Prostate gland (tissue), 2 donors: ENCODE measurements at regions of chr14 and their contacts with region 1.

Region 1: DNA sequence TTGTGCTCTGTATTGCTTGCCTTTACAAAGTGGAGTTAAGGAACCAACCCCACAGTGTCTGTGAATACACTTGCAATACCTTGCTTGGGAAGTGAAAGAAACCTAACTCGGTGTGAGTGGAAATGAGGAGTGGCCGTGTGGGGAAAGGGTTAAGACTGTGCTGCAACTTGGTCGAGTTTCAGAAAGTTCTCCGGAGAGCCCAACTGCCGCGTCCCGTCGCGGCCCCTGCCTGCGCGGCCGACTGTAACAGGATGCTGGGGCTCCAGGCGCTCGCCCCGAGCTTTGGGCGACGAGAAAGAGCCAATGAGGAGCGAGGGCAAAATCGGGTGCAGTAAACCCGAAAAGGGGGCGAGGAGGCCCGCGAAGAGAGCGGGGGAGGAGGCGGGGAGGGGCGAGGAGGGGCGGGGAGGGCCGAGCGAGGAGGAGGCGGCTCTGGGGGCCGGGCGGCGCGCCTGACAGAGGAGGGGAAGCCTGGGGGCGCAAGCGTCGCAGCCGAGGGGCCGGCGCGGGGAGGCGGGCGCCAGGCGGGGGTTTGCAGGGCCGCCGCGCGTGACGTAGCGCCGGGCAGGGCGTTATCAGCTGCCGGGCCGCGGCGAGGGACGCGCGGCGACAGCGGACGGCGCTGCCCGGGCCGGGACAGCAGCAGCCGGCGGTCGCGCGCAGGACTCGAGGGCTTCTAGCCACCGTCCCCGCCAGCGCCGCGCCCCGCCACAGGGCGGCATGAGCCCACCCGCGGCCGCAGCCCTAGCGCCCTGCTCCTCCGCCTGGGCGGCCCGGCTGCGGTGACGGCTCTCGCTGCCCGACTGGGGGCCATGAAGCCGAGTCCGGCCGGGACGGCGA is at the start of gene DACT1:
- DNase-seq: peak; percentile 45
- H3K4me3 ChIP-seq: peak within 1 kb of the TSS; percentile 56 to 58
- H3K27ac ChIP-seq: peak within 1 kb of the TSS; percentile 80 to 81
- H3K4me1 ChIP-seq: peaks cover 3% of the 10 kb centered on the region
- H3K27me3 ChIP-seq: no peaks in the 10 kb centered on the region
- CTCF ChIP-seq: peak in 1 of 4 experiments; percentile 32
- POLR2A ChIP-seq: no peak
- total RNA-seq, gene DACT1: 4.5 to 27.1 TPM

Region 2: DNA sequence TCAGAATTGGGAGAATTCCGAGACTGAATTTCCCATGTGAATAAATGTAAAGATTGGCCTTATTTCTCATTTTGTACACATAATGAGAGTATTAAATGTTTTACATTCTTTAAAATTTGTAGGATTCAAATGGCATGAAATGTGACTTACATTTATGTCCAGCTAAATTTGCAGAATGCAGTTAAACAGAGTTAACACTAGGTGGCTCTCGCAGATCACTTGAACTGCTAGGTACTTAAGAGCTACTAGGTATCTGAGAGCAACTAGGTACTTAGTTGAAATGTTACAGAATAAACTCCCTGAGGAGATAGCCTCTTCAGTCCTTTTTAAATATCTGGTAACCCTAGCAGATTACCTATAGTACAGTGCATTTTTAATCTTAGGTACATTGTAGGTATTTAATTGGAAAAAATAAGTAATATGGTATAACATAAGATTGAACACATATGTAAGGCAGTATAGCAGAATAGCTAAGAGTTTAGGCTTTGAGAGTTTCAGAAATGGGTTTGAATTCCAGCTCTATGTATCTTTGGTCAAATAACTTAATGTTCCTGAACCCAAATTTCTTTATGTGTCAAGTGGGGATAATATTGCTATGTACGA is 136.3 kb before region 1 on chr14:
- intact Hi-C with region 1: loop called (anchors 2 kb)
- DNase-seq: no peak
- H3K4me3 ChIP-seq: no peak overlapping the region
- H3K27ac ChIP-seq: no peak overlapping the region
- H3K4me1 ChIP-seq: no peaks in the 10 kb centered on the region
- H3K27me3 ChIP-seq: no peaks in the 10 kb centered on the region
- CTCF ChIP-seq: peak; percentile 42 to 87 (median 72)
- POLR2A ChIP-seq: no peak

Region 3: DNA sequence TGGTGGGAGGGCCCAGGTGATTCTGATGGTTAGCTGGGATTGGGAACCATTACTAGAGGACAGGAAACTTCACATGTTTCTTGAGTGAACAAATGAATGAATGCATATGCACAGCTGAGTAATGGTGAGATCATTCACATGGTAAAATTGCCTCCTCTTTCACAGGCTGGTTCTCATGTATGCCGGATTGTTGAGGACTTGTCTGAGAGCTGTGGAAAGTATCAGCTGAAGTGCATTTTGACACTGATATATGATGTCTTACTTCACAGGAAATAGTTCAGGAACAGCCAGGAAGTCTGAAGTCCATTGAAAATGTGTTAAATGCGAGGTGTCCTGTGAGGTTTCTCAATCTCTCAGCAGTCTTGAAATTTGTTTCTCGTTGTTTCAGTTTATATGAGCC is 77.4 kb before region 1 on chr14:
- intact Hi-C with region 1: no loop called
- DNase-seq: no peak
- H3K4me3 ChIP-seq: no peak overlapping the region
- H3K27ac ChIP-seq: no peak overlapping the region
- H3K4me1 ChIP-seq: no peaks in the 10 kb centered on the region
- H3K27me3 ChIP-seq: no peaks in the 10 kb centered on the region
- CTCF ChIP-seq: no peak
- POLR2A ChIP-seq: no peak

Region 4: DNA sequence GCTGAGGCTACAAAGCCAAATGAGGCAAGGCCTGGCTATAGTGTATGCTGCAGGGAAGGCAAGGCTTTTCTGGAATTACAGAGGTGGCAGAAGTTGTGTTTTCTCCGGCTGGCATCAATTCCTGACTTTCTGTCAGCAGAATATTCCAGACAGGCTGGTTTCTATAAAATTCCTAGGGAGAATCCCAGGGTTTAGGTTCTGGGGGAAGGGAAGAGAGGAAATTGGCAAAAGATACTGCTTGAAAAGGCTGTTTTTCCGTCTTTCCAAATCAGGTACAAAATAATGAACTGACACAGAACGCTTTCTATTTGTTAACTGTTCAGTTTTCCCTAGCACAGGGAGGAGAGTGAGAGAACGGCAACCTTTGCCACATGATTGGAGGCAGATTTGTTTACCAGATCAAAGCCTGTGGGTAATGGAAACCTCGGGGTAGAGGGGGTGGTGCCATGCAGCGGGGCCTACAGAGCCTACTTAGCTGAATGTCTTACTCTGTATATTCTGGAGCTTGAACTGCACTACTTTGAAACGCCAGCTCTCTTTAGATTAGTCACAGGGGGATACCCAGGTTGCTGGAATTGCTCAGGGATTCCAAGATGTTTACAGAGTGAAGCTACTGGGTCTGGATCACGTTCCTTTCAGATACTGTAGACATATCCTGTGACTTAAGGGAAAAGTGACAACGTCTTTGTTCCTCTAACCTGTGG is 65.7 kb before region 1 on chr14:
- intact Hi-C with region 1: loop called (anchors 10 kb)
- DNase-seq: no peak
- H3K4me3 ChIP-seq: no peak overlapping the region
- H3K27ac ChIP-seq: peak overlapping the region in 1 of 2 donors; percentile 21
- H3K4me1 ChIP-seq: no peaks in the 10 kb centered on the region
- H3K27me3 ChIP-seq: no peaks in the 10 kb centered on the region
- CTCF ChIP-seq: no peak
- POLR2A ChIP-seq: no peak

Region 5: DNA sequence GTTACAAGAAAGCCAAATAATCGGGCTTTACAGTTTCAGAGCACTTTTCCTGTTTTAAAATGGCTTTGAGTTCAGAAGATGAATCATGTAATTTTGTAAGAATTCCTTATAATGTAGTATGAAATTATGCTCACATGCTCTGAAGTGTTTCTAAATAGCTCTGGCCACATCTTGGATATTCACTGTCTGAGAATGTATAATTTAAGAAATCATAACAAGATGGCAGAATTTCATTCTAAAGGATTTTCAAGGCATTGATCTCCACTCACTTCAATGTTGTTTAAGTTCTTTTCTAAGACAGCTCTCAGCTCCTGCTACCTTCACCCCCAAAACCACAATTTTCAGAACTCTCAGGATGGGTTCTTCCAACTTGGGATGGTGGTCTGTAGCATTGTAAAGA is 180.2 kb after region 1 on chr14:
- intact Hi-C with region 1: no loop called
- DNase-seq: no peak
- H3K4me3 ChIP-seq: no peak overlapping the region
- H3K27ac ChIP-seq: no peak overlapping the region
- H3K4me1 ChIP-seq: no peaks in the 10 kb centered on the region
- H3K27me3 ChIP-seq: no peaks in the 10 kb centered on the region
- CTCF ChIP-seq: no peak
- POLR2A ChIP-seq: no peak

Region 6: GRCh38 chr14:59028476-59029202 is 391.0 kb after region 1 on chr14:
- intact Hi-C with region 1: loop called (anchors 10 kb)
- DNase-seq: peak; percentile 23
- H3K4me3 ChIP-seq: no peak overlapping the region
- H3K27ac ChIP-seq: no peak overlapping the region
- H3K4me1 ChIP-seq: no peaks in the 10 kb centered on the region
- H3K27me3 ChIP-seq: no peaks in the 10 kb centered on the region
- CTCF ChIP-seq: peak; percentile 16 to 65 (median 56)
- POLR2A ChIP-seq: no peak

Region 7: GRCh38 chr14:59055439-59056045 is 417.9 kb after region 1 on chr14:
- intact Hi-C with region 1: loop called (anchors 2 kb)
- DNase-seq: peak; percentile 16
- H3K4me3 ChIP-seq: no peak overlapping the region
- H3K27ac ChIP-seq: no peak overlapping the region
- H3K4me1 ChIP-seq: no peaks in the 10 kb centered on the region
- H3K27me3 ChIP-seq: no peaks in the 10 kb centered on the region
- CTCF ChIP-seq: peak; percentile 30 to 80 (median 62)
- POLR2A ChIP-seq: no peak

Region 8: GRCh38 chr14:59229653-59230406 is 592.2 kb after region 1 on chr14:
- intact Hi-C with region 1: no loop called
- DNase-seq: no peak
- H3K4me3 ChIP-seq: no peak overlapping the region
- H3K27ac ChIP-seq: no peak overlapping the region
- H3K4me1 ChIP-seq: no peaks in the 10 kb centered on the region
- H3K27me3 ChIP-seq: no peaks in the 10 kb centered on the region
- CTCF ChIP-seq: no peak
- POLR2A ChIP-seq: no peak